Naive thymus-derived CD4-positive, alpha-beta T cell (primary cell): ENCODE measurements at regions of chr5 and their contacts with region 1.

Region 1: DNA sequence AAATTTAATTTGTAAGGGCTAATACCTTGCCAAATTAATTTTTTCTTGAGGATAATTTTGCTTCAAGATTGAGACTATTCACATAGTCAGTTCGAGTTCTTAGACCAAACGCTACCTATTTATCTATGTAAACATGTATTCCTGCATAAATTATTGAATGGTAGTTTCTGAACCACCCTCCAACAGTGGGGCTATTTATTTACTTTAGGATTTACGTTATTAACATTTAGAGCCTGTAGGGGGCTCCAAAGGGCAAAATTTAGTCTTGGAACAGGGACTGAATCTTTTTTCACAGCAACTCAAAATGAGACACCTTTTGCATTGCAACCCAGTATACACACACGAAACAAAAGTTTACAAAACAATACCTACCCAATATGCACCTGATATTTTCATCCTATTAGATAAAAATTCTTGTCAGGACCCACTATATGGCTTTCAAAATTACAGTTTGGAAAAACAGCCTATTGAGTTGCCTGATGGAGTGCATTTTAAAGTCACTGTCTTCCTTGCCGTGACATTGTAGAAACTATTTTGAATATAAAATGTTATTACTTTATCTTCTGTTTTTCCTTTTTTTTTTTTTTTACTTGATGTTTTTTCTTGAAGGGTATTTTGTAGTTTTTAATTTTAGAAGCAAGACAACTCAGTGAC is 47.1 kb upstream of the POU4F3 start:
- DNase-seq: peak in 6 of 9 donors; percentile 6 to 45 (median 28)
- ATAC-seq: peak; percentile 73
- H3K4me3 ChIP-seq: no peak overlapping the region
- H3K4me3 Mint-ChIP-seq: no peak overlapping the region
- H3K27ac ChIP-seq: no peak overlapping the region
- H3K27ac Mint-ChIP-seq: no peak overlapping the region
- H3K4me1 ChIP-seq: no peaks in the 10 kb centered on the region
- H3K4me1 Mint-ChIP-seq: no peaks in the 10 kb centered on the region
- H3K27me3 ChIP-seq: no peaks in the 10 kb centered on the region
- H3K27me3 Mint-ChIP-seq: no peaks in the 10 kb centered on the region

Region 2: DNA sequence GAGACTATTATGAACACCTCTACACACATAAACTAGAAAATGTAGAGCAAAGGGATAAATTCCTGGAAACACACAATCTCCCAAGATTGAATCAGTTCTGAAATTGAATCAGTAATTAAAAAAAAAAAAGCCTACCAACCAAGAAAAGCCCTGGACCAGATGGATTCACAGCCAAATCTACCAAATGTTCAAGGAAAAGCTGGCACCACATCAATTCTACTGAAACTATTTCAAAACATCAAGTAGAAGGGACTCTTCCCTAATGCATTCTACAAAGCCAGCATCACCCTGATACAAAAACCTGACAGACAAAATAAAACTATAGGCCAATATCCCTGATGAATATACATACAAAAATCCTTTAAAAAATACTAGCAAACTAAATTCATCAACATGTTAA is 393.4 kb before region 1 on chr5:
- CTCF ChIA-PET with region 1: no interaction called
- POLR2A ChIA-PET with region 1: no interaction called
- intact Hi-C with region 1: no loop called
- DNase-seq: no peak
- ATAC-seq: no peak
- H3K4me3 ChIP-seq: no peak overlapping the region
- H3K4me3 Mint-ChIP-seq: no peak overlapping the region
- H3K27ac ChIP-seq: no peak overlapping the region
- H3K27ac Mint-ChIP-seq: no peak overlapping the region
- H3K4me1 ChIP-seq: no peaks in the 10 kb centered on the region
- H3K4me1 Mint-ChIP-seq: no peaks in the 10 kb centered on the region
- H3K27me3 ChIP-seq: no peaks in the 10 kb centered on the region
- H3K27me3 Mint-ChIP-seq: peaks cover 0 to 13% (median 0%) of the 10 kb centered on the region in 5 donors

Region 3: GRCh38 chr5:146426853-146427618 is 135.5 kb after region 1 on chr5:
- CTCF ChIA-PET with region 1: interaction called, 3 read pairs
- POLR2A ChIA-PET with region 1: no interaction called
- intact Hi-C with region 1: loop called (anchors 1 kb)
- DNase-seq: peak in 5 of 9 donors; percentile 33 to 47 (median 45)
- ATAC-seq: peak; percentile 74
- H3K4me3 ChIP-seq: no peak overlapping the region
- H3K4me3 Mint-ChIP-seq: peak overlapping the region in 1 of 10 donors; percentile 33
- H3K27ac ChIP-seq: no peak overlapping the region
- H3K27ac Mint-ChIP-seq: peak overlapping the region in 2 of 9 donors; percentile 5 to 22
- H3K4me1 ChIP-seq: no peaks in the 10 kb centered on the region
- H3K4me1 Mint-ChIP-seq: peaks cover 0 to 8% (median 5%) of the 10 kb centered on the region in 7 donors
- H3K27me3 ChIP-seq: no peaks in the 10 kb centered on the region
- H3K27me3 Mint-ChIP-seq: peaks cover 11 to 28% (median 19%) of the 10 kb centered on the region in 5 donors

Region 4: GRCh38 chr5:146906803-146907202 is 615.3 kb after region 1 on chr5:
- CTCF ChIA-PET with region 1: no interaction called
- POLR2A ChIA-PET with region 1: no interaction called
- intact Hi-C with region 1: no loop called
- DNase-seq: no peak
- ATAC-seq: no peak
- H3K4me3 ChIP-seq: no peak overlapping the region
- H3K4me3 Mint-ChIP-seq: no peak overlapping the region
- H3K27ac ChIP-seq: no peak overlapping the region
- H3K27ac Mint-ChIP-seq: no peak overlapping the region
- H3K4me1 ChIP-seq: peaks cover 0 to 3% of the 10 kb centered on the region in 2 donors
- H3K4me1 Mint-ChIP-seq: peaks cover 0 to 4% (median 0%) of the 10 kb centered on the region in 7 donors
- H3K27me3 ChIP-seq: no peaks in the 10 kb centered on the region
- H3K27me3 Mint-ChIP-seq: peaks cover 0 to 10% (median 2%) of the 10 kb centered on the region in 5 donors